GM10248 (cell line): ENCODE measurements at regions of chr9 and their contacts with region 1.

Region 1: DNA sequence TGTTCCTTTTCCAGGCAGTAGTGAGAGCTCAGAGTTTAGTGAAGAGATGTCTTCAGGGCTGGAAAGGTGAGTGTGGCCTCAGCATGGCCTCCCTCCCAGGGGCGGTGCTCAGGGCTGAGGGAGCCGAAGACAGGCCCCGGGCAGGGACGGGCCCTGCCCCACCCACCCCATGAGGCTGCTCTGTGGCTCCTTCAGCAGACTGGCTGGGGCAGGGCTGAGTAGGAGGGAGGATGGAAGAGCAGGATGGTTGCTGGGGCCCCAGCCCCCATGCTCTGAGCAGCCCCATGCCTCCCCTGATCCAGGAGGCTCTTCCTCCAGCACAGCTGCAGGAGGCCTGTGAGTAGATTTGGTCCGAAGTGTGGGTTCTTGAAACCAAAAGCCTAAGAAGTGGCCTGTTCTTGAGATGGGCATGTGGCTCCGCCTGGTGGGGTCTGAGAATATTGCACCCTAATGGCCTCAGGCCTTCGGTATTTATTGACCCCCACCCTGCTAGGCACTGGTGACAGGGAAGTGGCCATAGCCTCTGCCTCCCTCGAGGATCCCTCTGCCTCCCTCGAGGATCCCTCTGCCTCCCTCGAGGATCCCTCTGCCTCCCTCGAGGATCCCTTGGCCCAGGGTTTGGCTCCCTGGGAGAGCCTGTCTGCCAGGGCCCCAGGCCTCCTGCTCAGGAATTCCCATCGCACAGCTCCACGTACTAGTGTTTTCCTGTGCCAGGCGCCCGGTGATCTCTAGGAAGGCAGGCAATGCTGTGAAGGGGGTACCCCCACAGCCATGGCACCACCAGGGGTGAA is 65.4 kb upstream of the GARNL3 start:
- DNase-seq: peak; percentile 88
- CTCF ChIP-seq: peak; percentile 92

Region 2: GRCh38 chr9:125748446-125749099 is 1450.6 kb before region 1 on chr9:
- CTCF ChIA-PET with region 1: no interaction called
- POLR2A ChIA-PET with region 1: interaction called, 10 read pairs
- DNase-seq: no peak
- CTCF ChIP-seq: no peak

Region 3: GRCh38 chr9:126965541-126966428 is 233.4 kb before region 1 on chr9:
- CTCF ChIA-PET with region 1: interaction called, 44 read pairs
- POLR2A ChIA-PET with region 1: no interaction called
- DNase-seq: peak; percentile 67
- CTCF ChIP-seq: peak; percentile 68

Region 4: GRCh38 chr9:127174386-127175318 is 24.5 kb before region 1 on chr9:
- CTCF ChIA-PET with region 1: interaction called, 23 read pairs
- POLR2A ChIA-PET with region 1: no interaction called
- DNase-seq: no peak
- CTCF ChIP-seq: no peak

Region 5: GRCh38 chr9:127214421-127215267 is 15.4 kb after region 1 on chr9:
- CTCF ChIA-PET with region 1: interaction called, 19 read pairs
- POLR2A ChIA-PET with region 1: no interaction called
- DNase-seq: peak; percentile 82
- CTCF ChIP-seq: peak; percentile 74

Region 6: DNA sequence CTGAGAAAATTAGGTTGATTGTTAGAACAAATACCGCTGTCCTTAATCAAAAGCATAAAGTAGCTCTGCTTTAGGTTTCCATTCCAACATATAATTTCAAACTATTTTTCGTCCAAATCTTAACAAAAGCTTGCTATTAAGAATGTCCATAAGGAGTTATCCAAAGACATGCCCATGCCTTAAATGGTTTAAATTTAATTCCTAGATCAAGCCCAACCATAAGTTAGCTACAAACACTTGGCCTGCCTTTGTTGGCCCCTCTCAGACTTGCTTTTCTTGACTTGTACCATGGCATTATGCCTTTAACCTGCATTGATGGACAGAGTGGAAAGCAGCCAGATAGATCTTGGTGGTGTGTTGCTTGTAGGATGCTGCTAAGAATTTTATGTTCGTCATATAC is 74.1 kb after region 1 on chr9:
- CTCF ChIA-PET with region 1: no interaction called
- POLR2A ChIA-PET with region 1: no interaction called
- DNase-seq: no peak
- CTCF ChIP-seq: no peak

Region 7: DNA sequence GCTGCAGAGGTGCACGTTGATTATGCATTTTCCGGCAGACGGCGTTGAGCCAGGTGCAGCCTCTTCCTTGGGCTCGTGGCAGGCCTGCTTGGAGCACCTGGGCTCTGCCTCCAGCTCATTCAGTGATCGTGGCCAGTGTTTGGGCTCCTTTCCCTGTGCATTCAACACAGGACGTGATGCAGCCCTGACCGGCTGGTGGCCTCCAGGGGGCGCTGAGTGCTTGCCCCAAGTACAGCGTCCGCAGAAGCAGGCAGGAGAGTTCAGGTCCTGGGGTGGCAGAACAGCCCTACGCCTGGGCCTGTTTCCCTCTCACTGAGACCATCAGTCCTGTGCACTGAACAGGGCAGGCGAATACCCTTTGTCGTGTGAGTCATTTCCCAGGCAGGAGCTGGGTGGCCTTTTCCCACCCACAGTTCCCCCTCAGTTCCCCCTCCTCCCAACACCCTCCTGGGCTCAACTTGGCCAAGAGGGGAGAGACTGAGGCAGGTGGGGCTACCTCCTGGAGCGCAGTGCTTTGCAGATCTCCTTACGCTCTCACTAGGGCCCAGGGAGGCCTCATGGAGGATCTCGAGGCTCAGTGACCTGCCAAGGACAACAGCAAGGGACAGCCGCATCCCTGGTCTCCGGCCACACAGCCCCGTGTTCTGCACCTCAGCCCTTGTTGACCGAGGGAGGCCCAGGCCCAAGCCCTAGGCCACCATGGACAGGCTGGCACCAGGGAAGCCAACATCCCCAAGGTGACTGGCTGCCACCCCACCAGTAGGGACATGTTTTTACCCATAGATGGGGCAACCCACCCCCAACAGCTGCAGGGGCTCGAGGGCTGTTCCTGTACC is 305.0 kb after region 1 on chr9:
- CTCF ChIA-PET with region 1: no interaction called
- POLR2A ChIA-PET with region 1: no interaction called
- DNase-seq: peak; percentile 78
- CTCF ChIP-seq: peak; percentile 92